Breast epithelium (tissue), 4 donors: ENCODE measurements at regions of chr10 and their contacts with region 1.

Region 1: GRCh38 chr10:121337427-121337826 is 260.8 kb downstream of the FGFR2 start:
- DNase-seq: no peak
- H3K4me3 ChIP-seq: no peak overlapping the region
- H3K27ac ChIP-seq: no peak overlapping the region
- H3K4me1 ChIP-seq: no peaks in the 10 kb centered on the region
- H3K27me3 ChIP-seq: no peaks in the 10 kb centered on the region
- CTCF ChIP-seq: no peak
- POLR2A ChIP-seq: no peak

Region 2: DNA sequence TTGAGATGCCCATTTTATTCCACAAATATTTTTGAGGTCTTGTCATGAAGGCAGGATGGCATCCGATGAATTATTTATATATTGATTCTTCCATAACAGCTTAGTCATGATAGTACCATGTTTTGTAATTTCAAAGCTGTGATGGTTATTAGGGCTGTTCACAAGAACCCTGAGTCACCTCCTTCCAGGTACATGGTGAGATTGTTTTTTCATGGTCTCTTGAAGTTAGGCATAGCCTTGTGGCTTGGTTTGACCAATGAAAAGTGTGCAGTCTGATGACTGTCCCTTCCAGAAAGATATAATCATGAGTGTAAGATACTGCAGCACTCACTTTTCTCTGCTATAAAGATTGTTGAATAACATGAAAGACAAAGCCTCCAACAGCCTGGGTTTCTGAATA is 14.0 kb before region 1 on chr10:
- intact Hi-C with region 1: loop called (anchors 1 kb)
- DNase-seq: no peak
- H3K4me3 ChIP-seq: no peak overlapping the region
- H3K27ac ChIP-seq: no peak overlapping the region
- H3K4me1 ChIP-seq: no peaks in the 10 kb centered on the region
- H3K27me3 ChIP-seq: no peaks in the 10 kb centered on the region
- CTCF ChIP-seq: no peak
- POLR2A ChIP-seq: no peak

Region 3: GRCh38 chr10:121362026-121362425 is 24.6 kb after region 1 on chr10:
- intact Hi-C with region 1: no loop called
- DNase-seq: peak in 1 of 2 donors; percentile 49
- H3K4me3 ChIP-seq: no peak overlapping the region
- H3K27ac ChIP-seq: peak overlapping the region in 1 of 2 donors; percentile 61
- H3K4me1 ChIP-seq: no peaks in the 10 kb centered on the region
- H3K27me3 ChIP-seq: no peaks in the 10 kb centered on the region
- CTCF ChIP-seq: no peak
- POLR2A ChIP-seq: no peak